ENCODE measurements at regions of chr2 and their contacts with region 1.

Region 1: DNA sequence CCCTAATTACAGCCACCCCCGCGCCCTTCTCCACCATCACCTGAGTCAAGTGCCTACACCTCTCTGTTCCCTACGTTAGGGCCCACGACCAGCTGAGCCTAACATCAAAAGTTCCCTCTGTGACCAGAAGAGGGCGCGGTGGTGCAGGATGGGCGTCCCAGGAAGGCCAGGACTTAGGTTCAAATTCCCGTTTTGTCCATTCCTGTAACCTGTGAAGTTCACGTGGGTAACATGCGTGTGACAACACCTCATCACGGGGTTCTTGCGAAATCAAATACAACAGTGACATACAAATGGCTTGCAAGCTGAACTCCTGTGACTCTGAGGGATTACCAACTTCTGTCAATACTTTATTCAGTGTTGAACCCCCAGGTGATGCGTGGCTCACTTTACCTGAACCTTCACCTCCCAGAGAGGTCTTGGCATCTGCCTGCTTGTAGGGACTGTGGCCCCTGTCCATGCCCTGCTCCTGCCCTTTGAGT is 207.9 kb downstream of the ARL4C start:
- DNase-seq: no peak
- ATAC-seq: peak; percentile 18; the same call in 2 of the 3 replicates
- H3K4me3 ChIP-seq: no peak overlapping the region
- H3K27ac ChIP-seq: no peak overlapping the region; the same call in 1 of the 2 replicates
- H3K4me1 ChIP-seq: peaks cover 39% of the 10 kb centered on the region
- H3K27me3 ChIP-seq: no peaks in the 10 kb centered on the region
- CTCF ChIP-seq: peak; percentile 73 to 84 (median 82)
- EP300 ChIP-seq: no peak
- POLR2A ChIP-seq: no peak
- RAD21 ChIP-seq: peak; percentile 65

Region 2: GRCh38 chr2:234308813-234309195 is 19.8 kb after region 1 on chr2:
- CTCF ChIA-PET with region 1: interaction called, 3 read pairs
- POLR2A ChIA-PET with region 1: interaction called, 4 read pairs
- RAD21 ChIA-PET with region 1: interaction called, 4 read pairs
- SMC1A ChIA-PET with region 1: interaction called, 9 read pairs
- in situ Hi-C with region 1: no loop called
- intact Hi-C with region 1: loop called (anchors 1 kb)
- DNase-seq: peak; percentile 71
- ATAC-seq: peak; percentile 90
- H3K4me3 ChIP-seq: no peak overlapping the region
- H3K27ac ChIP-seq: 0 out of 2 replicates have a peak overlapping the region, but pooled peaks have one; percentile 1
- H3K4me1 ChIP-seq: peaks cover 6% of the 10 kb centered on the region; the same call in 1 of the 2 replicates
- H3K27me3 ChIP-seq: no peaks in the 10 kb centered on the region
- CTCF ChIP-seq: no peak
- EP300 ChIP-seq: peak; percentile 83 to 90; a peak in 2 of 4 replicates
- POLR2A ChIP-seq: no peak
- RAD21 ChIP-seq: no peak

Region 3: DNA sequence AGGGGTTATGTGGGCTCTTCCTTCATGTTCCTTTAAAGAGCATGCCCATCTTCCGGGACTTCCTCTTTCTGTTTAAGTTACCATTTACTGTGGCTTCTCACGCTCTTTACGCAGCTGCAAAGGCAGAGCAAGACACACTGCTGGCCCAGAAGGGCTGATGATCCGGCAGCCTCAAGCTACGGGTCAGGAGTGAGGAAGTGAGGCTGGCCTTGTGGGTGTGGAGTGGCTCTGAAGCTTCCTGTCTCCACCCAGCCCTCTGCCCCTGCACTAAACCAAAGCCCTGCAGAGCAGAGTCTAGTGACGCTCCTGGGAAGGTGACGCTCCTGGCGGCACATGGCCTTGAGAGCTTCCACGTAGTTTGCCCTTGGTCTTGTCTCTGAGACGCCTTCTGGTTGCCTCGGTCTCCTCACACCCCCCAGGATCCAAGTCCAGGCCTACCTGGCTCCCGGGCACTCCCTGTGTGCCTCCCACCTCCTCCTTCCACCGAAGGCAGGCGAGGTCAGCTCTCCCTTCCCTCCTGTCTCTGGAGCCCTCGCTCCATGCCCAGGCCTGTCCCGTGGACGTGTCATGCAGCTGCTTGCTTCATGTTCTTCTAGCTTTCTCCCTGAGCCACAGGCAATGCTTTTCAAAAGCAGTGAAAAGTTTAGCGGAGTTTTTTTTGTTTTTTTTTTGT is 157.5 kb after region 1 on chr2:
- CTCF ChIA-PET with region 1: no interaction called
- POLR2A ChIA-PET with region 1: no interaction called
- RAD21 ChIA-PET with region 1: no interaction called
- SMC1A ChIA-PET with region 1: no interaction called
- in situ Hi-C with region 1: no loop called
- intact Hi-C with region 1: loop called (anchors 5 kb)
- DNase-seq: peak; percentile 66
- ATAC-seq: peak; percentile 94
- H3K4me3 ChIP-seq: no peak overlapping the region
- H3K27ac ChIP-seq: peak overlapping the region; percentile 45
- H3K4me1 ChIP-seq: peaks cover 14% of the 10 kb centered on the region
- H3K27me3 ChIP-seq: no peaks in the 10 kb centered on the region
- CTCF ChIP-seq: no peak
- EP300 ChIP-seq: no peak
- POLR2A ChIP-seq: peak; percentile 47; the same call in 1 of the 2 replicates
- RAD21 ChIP-seq: no peak

Region 4: DNA sequence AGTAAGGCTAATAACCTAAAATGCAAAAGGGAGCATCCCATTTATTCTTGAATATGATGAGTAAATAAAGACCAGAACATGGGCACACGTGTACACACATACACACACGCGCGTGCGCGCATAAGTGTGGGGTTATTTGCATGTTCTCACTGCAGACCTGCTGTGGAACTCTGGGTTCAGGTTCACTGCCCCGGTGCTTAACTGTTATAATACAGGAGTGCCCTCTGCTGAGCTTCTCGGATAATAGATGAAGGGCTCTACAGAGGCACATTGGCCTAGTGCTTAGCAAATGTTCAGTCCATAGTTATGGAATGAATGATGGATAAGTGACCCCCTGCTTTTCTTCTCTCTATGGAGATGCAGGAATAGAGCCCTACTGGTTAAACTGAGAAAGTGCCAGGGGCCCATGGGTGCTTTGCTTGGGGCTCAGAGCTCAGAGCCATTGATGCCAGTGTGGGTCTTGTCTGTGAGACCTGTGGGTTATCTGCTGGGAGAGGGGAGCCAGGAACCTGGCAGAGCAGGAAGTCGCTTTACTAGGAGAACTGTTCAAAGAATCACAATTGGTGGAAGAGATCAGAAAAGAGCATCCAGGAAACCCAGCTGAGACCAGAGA is 211.5 kb after region 1 on chr2:
- CTCF ChIA-PET with region 1: interaction called, 15 read pairs
- POLR2A ChIA-PET with region 1: no interaction called
- RAD21 ChIA-PET with region 1: interaction called, 5 read pairs
- SMC1A ChIA-PET with region 1: interaction called, 4 read pairs
- in situ Hi-C with region 1: loop called (anchors 5 kb)
- intact Hi-C with region 1: loop called (anchors 1 kb)
- DNase-seq: peak; percentile 53
- ATAC-seq: peak; percentile 90
- H3K4me3 ChIP-seq: no peak overlapping the region
- H3K27ac ChIP-seq: no peak overlapping the region
- H3K4me1 ChIP-seq: peaks cover 3% of the 10 kb centered on the region
- H3K27me3 ChIP-seq: peaks cover 3 to 7% of the 10 kb centered on the region in 2 experiments
- CTCF ChIP-seq: peak; percentile 50 to 74 (median 66)
- EP300 ChIP-seq: no peak
- POLR2A ChIP-seq: no peak
- RAD21 ChIP-seq: peak; percentile 77